Activated naive CD4-positive, alpha-beta T cell treated with anti-CD3 and anti-CD28 coated beads for 36 hours (primary cell): ENCODE measurements at regions of chr12 and their contacts with region 1.

Region 1: DNA sequence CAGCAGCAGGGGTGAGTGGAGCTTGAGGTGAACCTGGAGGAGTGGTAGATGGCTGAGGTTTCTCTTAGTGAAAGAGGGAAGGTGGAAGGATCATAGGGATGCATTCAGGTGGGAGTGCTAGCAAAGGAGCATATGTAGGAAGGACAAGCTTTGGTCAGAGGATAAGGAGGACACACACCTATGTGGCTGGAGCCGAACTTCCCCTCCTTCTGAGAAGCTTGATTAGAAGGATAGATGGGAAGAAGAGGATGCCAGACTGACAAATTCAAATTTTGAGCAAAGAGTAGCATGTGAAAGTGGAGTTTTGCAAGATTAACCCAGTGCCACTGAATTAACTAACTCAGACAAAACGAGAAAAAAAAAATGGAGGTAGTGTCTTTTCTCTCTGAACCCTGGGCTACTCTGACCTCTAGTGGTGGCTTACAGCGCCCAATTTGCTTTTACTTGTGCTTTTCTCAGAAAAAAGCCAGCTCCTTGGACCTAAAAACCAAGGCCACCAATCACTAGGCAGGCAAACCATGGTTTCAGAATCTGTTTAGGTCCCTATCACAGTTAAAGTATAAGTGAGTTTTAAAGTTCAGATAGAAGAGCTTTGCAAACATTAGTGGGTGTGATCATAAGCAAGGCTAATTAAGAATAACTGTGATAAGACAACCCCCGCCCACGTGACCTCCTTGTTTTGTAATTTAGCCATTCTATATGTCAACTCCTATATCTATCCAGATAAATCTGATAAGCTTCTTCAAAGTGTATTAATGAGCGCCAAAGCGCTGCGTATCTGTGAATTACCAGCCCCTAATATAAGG is 15.5 kb downstream of the EMP1 start:
- DNase-seq: peak; percentile 86
- H3K4me3 Mint-ChIP-seq: no peak overlapping the region
- H3K27ac Mint-ChIP-seq: no peak overlapping the region
- H3K4me1 Mint-ChIP-seq: peaks cover 20% of the 10 kb centered on the region
- H3K27me3 Mint-ChIP-seq: peaks cover 2% of the 10 kb centered on the region

Region 2: DNA sequence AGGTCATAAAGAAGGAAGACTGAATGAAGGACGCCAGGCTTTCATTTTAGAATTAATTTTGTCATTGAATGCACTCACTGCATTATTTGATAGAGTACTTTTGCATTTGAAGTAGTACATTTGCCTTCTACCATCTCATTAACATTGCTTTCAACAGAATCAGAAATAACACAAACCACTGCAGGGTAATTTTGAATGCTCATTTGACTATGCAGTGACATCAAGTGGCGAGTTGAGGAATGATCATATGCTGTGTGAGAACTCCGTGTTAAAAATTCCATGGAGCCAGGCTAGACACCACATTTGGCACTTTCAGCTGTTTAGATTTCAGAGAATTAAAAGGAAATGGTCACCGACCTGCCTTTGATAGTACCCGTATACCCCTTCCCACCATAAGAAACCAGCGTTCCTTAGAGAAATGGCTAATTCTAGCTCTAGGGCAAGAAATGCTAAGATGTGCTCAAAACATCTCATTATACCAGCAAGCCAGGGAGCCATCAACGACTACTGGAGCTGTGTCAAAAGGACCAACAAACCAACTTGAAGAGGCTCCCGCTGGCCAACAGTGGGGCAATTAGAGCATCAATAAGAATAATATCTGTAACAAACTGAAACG is 228.5 kb before region 1 on chr12:
- CTCF ChIA-PET with region 1: interaction called, 14 read pairs
- intact Hi-C with region 1: loop called (anchors 1 kb)
- DNase-seq: peak; percentile 38
- H3K4me3 Mint-ChIP-seq: no peak overlapping the region
- H3K27ac Mint-ChIP-seq: no peak overlapping the region
- H3K4me1 Mint-ChIP-seq: no peaks in the 10 kb centered on the region
- H3K27me3 Mint-ChIP-seq: no peaks in the 10 kb centered on the region

Region 3: GRCh38 chr12:13044002-13044905 is 167.8 kb before region 1 on chr12 and contains the start of gene FAM234B:
- CTCF ChIA-PET with region 1: interaction called, 11 read pairs
- intact Hi-C with region 1: no loop called
- DNase-seq: peak; percentile 73
- H3K4me3 Mint-ChIP-seq: peak within 1 kb of the TSS; percentile 79
- H3K27ac Mint-ChIP-seq: no peak within 1 kb of the TSS
- H3K4me1 Mint-ChIP-seq: peaks cover 16% of the 10 kb centered on the region
- H3K27me3 Mint-ChIP-seq: no peaks in the 10 kb centered on the region
- total RNA-seq, gene FAM234B: 7.4 to 7.7 TPM

Region 4: DNA sequence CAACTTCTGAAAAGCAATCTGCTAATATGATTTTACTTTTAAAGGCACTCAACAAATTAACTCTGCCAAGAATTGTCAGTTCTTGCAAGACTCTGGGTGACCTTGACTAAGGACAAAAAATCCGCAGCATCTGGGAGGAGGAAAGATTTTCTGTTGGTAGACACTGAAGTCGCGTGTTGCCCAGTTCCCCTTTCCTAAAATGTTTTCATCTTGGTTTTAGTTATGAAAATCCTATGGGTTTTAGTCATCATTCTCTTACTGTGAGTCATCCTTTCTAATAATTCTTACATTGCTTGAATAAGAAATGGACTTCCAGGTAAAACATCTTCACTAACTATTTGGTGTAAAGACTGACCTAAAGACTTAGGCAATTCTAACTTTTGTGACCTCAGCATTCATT is 117.7 kb before region 1 on chr12:
- CTCF ChIA-PET with region 1: interaction called, 147 read pairs
- intact Hi-C with region 1: loop called (anchors 1 kb)
- DNase-seq: no peak
- H3K4me3 Mint-ChIP-seq: no peak overlapping the region
- H3K27ac Mint-ChIP-seq: no peak overlapping the region
- H3K4me1 Mint-ChIP-seq: peaks cover 16% of the 10 kb centered on the region
- H3K27me3 Mint-ChIP-seq: no peaks in the 10 kb centered on the region

Region 5: DNA sequence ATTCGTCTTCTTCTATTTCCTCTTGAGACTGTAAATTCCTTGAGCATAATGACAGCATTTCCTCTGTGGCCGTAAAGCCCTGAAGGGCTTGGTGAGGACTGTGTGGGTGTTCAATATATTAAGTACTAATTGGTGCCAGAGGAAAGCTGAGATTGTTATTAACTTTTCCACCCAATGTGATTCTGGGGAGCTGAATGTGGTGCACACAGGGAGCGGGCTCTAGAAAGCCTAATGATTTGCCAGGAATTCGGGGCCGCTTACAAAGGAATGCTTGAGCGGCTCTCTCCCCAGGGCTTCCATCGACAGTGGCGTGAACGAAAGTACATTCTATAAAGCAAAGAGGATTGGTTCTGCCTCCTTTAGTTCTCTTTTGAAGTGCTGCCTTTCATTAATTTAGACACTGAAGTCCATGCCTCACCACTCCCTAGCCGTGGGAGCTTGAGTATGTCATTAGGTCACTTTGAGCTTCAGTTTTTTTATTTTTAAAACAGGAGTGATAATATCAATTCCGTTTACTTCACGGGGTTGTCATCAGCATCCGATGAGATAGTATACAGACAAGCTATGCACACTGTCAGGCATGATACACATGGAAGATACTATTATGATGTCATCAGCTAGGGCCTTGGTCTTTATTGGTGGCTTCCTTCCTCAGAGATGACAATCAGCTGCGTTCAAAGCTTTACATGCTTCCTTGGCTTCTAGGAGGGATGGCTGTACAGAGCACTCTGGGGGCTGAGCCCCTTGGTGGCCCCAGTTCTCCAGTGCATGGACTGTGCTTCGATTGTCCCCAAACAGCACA is 97.6 kb before region 1 on chr12:
- CTCF ChIA-PET with region 1: interaction called, 11 read pairs
- intact Hi-C with region 1: no loop called
- DNase-seq: no peak
- H3K4me3 Mint-ChIP-seq: no peak overlapping the region
- H3K27ac Mint-ChIP-seq: no peak overlapping the region
- H3K4me1 Mint-ChIP-seq: no peaks in the 10 kb centered on the region
- H3K27me3 Mint-ChIP-seq: no peaks in the 10 kb centered on the region

Region 6: DNA sequence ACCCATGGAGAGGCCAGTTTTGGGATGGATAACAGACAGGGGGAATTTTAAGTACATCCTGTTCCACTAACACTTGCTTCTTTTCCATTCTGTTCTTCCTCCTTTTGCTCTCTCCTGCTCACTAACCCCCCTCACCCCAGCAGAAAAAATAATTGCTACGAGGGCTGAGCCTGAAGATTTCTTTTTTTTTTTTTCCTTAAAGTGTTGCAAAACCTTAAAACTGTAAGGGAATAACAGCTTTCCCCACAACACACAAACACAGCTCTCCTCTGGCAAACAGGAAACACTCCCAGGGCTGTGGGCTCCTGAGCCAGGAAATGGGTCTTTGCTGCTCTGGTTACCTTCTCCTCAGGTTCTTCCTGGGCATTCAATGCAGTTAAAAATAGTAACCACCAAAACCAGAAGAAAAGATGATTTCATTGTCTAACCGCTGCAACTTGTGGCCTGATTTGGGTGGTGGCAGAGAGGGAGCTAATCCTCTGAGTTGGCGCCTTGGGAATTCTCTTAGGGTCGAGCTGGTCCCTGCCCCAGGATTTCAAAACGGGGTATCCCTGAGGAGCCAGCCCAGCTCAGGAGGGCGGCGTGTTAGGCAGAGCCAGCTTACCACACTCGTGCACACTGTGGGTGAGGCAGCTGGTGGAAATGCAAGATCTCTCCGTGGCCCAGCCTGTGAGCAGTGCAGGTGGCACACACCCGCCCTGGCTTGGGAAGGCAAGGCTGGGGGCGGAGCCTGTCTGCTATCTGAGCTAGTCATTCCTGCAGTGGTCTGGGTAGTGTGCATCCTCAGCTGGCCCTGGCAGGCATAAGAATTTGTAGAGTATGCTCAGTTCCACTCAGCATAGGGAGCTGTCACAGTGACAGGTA is 32.6 kb before region 1 on chr12:
- CTCF ChIA-PET with region 1: interaction called, 12 read pairs
- intact Hi-C with region 1: no loop called
- DNase-seq: peak; percentile 74
- H3K4me3 Mint-ChIP-seq: peak overlapping the region; percentile 37
- H3K27ac Mint-ChIP-seq: no peak overlapping the region
- H3K4me1 Mint-ChIP-seq: peaks cover 15% of the 10 kb centered on the region
- H3K27me3 Mint-ChIP-seq: no peaks in the 10 kb centered on the region